HepG2 (cell line): ENCODE measurements at regions of chr11 and their contacts with region 1.

Region 1: DNA sequence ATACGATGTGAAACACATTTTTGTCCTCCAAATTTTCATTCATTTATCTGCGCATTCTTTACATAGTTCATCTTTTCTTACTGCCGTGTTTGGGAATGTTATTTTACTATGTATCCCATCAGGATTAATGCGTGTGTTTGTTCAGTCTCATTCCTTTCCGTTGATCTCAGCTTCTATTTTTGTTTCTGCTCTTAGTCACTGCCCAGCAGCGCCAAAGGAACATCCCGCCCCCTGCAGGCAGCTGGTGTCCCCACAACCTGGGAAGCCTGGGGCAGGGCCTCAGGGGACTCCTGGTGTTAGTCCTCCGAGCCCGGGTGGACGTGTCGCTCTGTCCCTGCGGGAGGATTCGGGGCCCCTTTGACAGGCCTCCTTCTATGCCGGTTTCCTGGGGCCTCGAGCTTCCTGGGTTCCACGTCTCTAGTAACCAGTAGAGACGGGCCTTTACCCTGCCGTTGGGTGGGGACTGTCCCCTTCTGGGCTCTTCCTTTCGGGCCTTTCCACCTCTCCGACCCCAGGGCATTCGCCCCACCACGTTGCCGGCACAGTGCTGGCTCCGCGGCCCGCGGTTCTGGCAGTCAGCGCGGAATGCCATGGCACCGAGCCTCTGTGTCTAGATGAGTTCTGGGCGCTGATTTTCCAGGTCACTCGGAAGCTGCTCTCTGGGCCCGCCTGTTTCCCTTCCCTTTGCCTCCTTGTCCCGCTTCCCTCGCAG is 39.8 kb downstream of the WEE1 start:
- DNase-seq: peak; percentile 94
- ATAC-seq: peak; percentile 92
- H3K4me3 ChIP-seq: peak overlapping the region; percentile 57 to 69 (median 57)
- H3K27ac ChIP-seq: peak overlapping the region; percentile 76
- H3K4me1 ChIP-seq: peaks cover 66% of the 10 kb centered on the region
- H3K27me3 ChIP-seq: no peaks in the 10 kb centered on the region; a peak in 1 of 5 replicates
- CTCF ChIP-seq: peak; percentile 95
- EP300 ChIP-seq: peak; percentile 53 to 67; a peak in 2 of 4 replicates
- POLR2A ChIP-seq: peak; percentile 57 to 74
- RAD21 ChIP-seq: peak; percentile 87

Region 2: DNA sequence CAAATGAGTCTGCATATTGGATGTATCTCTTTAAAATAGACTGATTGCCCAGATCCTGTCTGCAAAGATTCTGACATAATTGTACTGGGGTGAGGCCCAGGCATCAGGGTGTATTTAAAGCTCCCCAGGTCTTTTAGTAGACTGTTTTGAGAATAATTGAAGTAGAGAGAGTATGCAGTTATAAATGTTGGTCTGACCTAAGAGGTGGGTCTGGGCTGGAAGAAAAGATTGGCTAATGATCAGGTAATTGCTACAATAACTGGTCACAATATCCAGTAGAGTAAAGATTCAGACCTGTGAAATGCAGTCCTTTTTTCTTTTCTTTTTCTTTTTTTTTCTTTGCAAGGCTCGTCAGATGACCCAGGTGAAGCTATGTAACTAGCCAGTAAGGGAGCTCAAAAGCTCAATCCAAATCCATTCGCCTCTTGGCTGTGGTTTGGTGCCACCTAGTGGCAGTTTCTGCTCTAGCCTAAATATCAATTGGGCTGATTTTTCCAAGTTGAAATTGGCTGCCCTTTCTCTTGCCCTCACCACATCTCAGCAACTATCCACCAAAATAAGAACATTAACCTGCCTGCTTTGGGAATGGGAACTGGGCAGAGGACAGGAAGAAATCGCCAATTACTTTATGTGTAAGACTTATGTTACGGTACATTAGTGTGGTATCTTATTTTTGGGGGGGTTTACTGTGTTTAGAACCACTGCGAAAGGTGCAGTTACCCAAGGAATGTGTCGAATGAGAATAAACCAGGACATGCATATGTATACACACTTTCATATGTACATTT is 106.6 kb before region 1 on chr11:
- CTCF ChIA-PET with region 1: interaction called, 4 read pairs
- POLR2A ChIA-PET with region 1: interaction called, 4 read pairs
- in situ Hi-C with region 1: no loop called
- intact Hi-C with region 1: loop called (anchors 1 kb)
- DNase-seq: peak; percentile 72
- ATAC-seq: peak; percentile 70
- H3K4me3 ChIP-seq: no peak overlapping the region
- H3K27ac ChIP-seq: no peak overlapping the region
- H3K4me1 ChIP-seq: peaks cover 36% of the 10 kb centered on the region
- H3K27me3 ChIP-seq: no peaks in the 10 kb centered on the region
- CTCF ChIP-seq: peak; percentile 90
- EP300 ChIP-seq: no peak
- POLR2A ChIP-seq: no peak
- RAD21 ChIP-seq: peak; percentile 79

Region 3: GRCh38 chr11:9534791-9535781 is 78.2 kb before region 1 on chr11:
- CTCF ChIA-PET with region 1: interaction called, 19 read pairs
- POLR2A ChIA-PET with region 1: interaction called, 19 read pairs
- in situ Hi-C with region 1: no loop called
- intact Hi-C with region 1: loop called (anchors 2 kb)
- DNase-seq: peak; percentile 51
- ATAC-seq: peak; percentile 68
- H3K4me3 ChIP-seq: peak overlapping the region in 2 of 3 experiments; percentile 17 to 30; a peak in 3 of 6 replicates
- H3K27ac ChIP-seq: peak overlapping the region; percentile 12
- H3K4me1 ChIP-seq: peaks cover 50% of the 10 kb centered on the region
- H3K27me3 ChIP-seq: no peaks in the 10 kb centered on the region
- CTCF ChIP-seq: peak; percentile 83
- EP300 ChIP-seq: no peak
- POLR2A ChIP-seq: no peak
- RAD21 ChIP-seq: peak; percentile 81; the same call in 1 of the 2 replicates

Region 4: DNA sequence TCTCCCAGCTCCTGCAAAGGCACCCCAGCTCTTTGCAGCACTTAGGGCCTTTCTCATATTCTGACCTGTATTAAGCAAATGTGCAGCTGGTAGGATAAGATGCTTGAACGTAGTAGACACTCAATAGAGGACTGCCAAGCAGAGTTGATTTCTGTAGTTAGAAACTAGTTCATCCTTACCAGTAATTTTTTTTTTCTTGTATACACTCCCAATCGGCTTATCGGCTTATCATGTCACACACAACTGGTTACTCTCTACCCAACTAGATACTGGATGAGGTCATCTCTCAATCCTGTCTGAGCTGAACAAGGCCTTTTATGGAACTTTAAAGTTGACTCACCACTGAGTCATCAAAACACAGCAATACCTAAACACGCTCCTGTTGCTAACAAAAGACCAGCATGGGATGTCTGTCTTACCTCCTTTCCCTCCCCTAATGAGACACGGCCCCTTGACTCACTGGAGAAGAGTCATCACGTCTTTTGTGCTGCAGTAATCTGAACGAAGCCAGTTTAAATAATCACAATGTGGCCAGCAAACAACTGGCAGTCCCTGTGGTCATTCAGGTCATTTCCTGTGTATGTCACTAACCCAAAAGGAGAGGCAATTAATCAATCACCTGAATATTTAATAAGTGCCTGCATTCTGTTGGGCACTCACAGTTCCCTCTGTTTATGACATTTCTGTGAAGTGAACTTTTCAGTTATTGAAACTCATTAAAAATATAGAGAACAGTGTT is 47.3 kb before region 1 on chr11:
- CTCF ChIA-PET with region 1: no interaction called
- POLR2A ChIA-PET with region 1: interaction called, 11 read pairs
- in situ Hi-C with region 1: loop called (anchors 5 kb)
- intact Hi-C with region 1: no loop called
- DNase-seq: peak; percentile 99
- ATAC-seq: peak; percentile 75
- H3K4me3 ChIP-seq: peak overlapping the region in 1 of 3 experiments; percentile 12; a peak in 1 of 6 replicates
- H3K27ac ChIP-seq: peak overlapping the region; percentile 100
- H3K4me1 ChIP-seq: peaks cover 68% of the 10 kb centered on the region
- H3K27me3 ChIP-seq: no peaks in the 10 kb centered on the region
- CTCF ChIP-seq: no peak
- EP300 ChIP-seq: peak; percentile 55 to 72; a peak in 2 of 4 replicates
- POLR2A ChIP-seq: peak in 1 of 2 experiments; percentile 58; a peak in 1 of 4 replicates
- RAD21 ChIP-seq: no peak

Region 5: GRCh38 chr11:9573052-9573774 is 40.1 kb before region 1 on chr11 and contains the start of gene WEE1:
- CTCF ChIA-PET with region 1: interaction called, 4 read pairs
- POLR2A ChIA-PET with region 1: interaction called, 35 read pairs
- in situ Hi-C with region 1: loop called (anchors 5 kb)
- intact Hi-C with region 1: loop called (anchors 2 kb)
- DNase-seq: peak; percentile 94
- ATAC-seq: peak; percentile 88
- H3K4me3 ChIP-seq: peak within 1 kb of the TSS; percentile 78 to 90 (median 87)
- H3K27ac ChIP-seq: peak within 1 kb of the TSS; percentile 100
- H3K4me1 ChIP-seq: peaks cover 67% of the 10 kb centered on the region
- H3K27me3 ChIP-seq: no peaks in the 10 kb centered on the region; a peak in 1 of 5 replicates
- CTCF ChIP-seq: no peak
- EP300 ChIP-seq: peak in 1 of 2 experiments; percentile 16; a peak in 2 of 4 replicates
- POLR2A ChIP-seq: peak in 1 of 2 experiments; percentile 91
- RAD21 ChIP-seq: no peak; the same call in 1 of the 2 replicates
- total RNA-seq, gene WEE1: 63.7 and 71.7 TPM in 2 replicates

Region 6: DNA sequence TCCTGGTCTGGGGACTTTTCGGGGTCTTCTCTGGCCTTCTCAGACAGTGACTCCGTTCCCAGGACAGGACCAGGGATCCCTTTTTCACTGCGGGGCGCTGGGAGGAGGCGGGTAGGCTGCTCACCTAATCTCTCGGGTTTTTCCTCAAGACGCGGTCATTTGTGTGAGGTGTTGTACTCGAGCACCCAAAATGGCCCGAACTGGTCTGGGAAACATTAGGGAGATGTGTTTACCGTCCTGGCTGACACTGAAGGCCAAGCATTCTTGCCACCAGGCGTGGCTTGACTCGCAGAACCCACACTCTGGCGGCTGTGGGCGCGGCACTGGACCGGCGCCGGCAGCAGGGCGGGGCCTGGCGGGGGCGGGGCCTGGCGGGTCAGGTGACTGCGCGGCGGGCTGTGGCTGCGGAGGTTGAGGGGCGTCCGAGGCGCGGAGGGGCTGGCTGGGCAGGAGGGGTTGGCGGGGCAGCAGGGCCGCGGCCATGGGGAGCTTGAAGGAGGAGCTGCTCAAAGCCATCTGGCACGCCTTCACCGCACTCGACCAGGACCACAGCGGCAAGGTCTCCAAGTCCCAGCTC is 50.5 kb after region 1 on chr11 and contains the start of gene SWAP70:
- CTCF ChIA-PET with region 1: no interaction called
- POLR2A ChIA-PET with region 1: interaction called, 3 read pairs
- in situ Hi-C with region 1: no loop called
- intact Hi-C with region 1: loop called (anchors 5 kb)
- DNase-seq: peak; percentile 81
- ATAC-seq: peak; percentile 96
- H3K4me3 ChIP-seq: peak within 1 kb of the TSS; percentile 80 to 99 (median 98)
- H3K27ac ChIP-seq: peak within 1 kb of the TSS; percentile 59
- H3K4me1 ChIP-seq: peaks cover 20% of the 10 kb centered on the region
- H3K27me3 ChIP-seq: peaks cover 0 to 3% of the 10 kb centered on the region in 2 experiments; a peak in 1 of 5 replicates
- CTCF ChIP-seq: peak; percentile 44
- EP300 ChIP-seq: no peak
- POLR2A ChIP-seq: peak; percentile 51 to 75
- RAD21 ChIP-seq: 0 out of 2 replicates have a peak, but pooled peaks have one; percentile 12
- total RNA-seq, gene SWAP70: 8.7 and 14.9 TPM in 2 replicates

Region 7: DNA sequence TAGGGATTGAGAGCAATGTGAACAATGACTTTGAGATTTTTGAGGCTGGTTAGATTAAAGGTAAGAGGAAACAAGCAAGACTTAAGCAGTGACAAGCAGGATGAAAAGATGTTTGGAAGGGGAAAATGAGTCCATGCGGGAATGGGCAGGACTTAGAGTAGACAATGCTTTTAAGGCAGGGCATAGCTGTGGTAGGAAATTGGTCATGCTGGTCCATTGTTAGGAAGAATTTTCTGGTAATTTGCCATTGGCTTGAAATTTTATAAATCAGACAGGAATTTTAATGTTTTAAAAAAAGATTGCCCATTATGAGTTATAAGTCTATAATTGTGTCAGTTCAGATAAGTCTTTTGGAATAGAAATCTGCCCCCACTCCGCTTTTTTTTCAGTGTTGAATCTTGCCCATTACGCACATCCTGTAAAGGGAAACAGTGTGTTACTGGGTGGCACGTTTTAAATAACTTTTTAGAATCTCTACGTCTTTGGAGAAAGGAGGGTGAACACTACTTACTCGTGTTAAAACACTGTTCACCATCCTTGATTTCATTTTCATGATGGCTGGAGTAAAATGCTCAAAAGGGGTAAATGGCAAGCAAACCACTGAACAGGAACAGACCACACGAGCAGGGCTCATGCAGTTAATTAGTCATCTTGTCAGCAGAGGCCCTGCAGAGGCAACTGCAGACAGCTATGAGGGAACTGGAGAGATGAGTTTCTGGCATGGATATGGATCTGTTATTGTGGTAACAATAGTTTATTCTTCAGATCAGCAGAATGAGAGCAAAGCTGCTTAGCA is 75.6 kb after region 1 on chr11:
- CTCF ChIA-PET with region 1: no interaction called
- POLR2A ChIA-PET with region 1: no interaction called
- in situ Hi-C with region 1: no loop called
- intact Hi-C with region 1: no loop called
- DNase-seq: no peak
- ATAC-seq: no peak
- H3K4me3 ChIP-seq: no peak overlapping the region
- H3K27ac ChIP-seq: no peak overlapping the region
- H3K4me1 ChIP-seq: no peaks in the 10 kb centered on the region
- H3K27me3 ChIP-seq: no peaks in the 10 kb centered on the region
- CTCF ChIP-seq: no peak
- EP300 ChIP-seq: no peak
- POLR2A ChIP-seq: no peak
- RAD21 ChIP-seq: no peak

Region 8: GRCh38 chr11:9748361-9748970 is 135.2 kb after region 1 on chr11:
- CTCF ChIA-PET with region 1: interaction called, 21 read pairs
- POLR2A ChIA-PET with region 1: no interaction called
- in situ Hi-C with region 1: loop called (anchors 5 kb)
- intact Hi-C with region 1: loop called (anchors 1 kb)
- DNase-seq: peak; percentile 63
- ATAC-seq: peak; percentile 94
- H3K4me3 ChIP-seq: no peak overlapping the region
- H3K27ac ChIP-seq: no peak overlapping the region
- H3K4me1 ChIP-seq: peaks cover 17% of the 10 kb centered on the region
- H3K27me3 ChIP-seq: no peaks in the 10 kb centered on the region
- CTCF ChIP-seq: peak; percentile 76
- EP300 ChIP-seq: no peak
- POLR2A ChIP-seq: no peak
- RAD21 ChIP-seq: peak; percentile 79